ENCODE measurements at regions of chr2 and their contacts with region 1.

Region 1: DNA sequence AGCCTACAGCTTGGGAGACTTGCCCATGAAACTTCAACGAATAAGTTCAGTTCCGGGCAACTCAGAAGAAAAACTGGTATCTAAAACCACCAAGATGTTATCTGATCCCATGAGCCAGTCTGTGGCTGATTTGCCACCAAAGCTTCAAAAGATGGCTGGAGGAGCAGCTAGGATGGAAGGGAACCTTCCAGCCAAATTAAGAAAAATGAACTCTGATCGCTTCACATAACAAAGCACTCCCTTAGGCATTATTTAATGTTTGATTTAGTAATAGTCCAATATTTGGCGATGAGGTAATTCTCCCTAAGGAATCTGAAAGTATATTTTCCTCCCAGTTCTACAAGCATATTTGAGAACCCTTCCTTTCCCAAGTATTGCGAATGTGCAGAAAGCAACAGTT is 156.6 kb downstream of the KCNJ3 start:
- DNase-seq: no peak
- H3K4me3 ChIP-seq: no peak overlapping the region
- H3K27ac ChIP-seq: no peak overlapping the region
- H3K4me1 ChIP-seq: no peaks in the 10 kb centered on the region
- H3K27me3 ChIP-seq: no peaks in the 10 kb centered on the region
- CTCF ChIP-seq: no peak
- EP300 ChIP-seq: no peak
- POLR2A ChIP-seq: no peak

Region 2: GRCh38 chr2:154443919-154444318 is 411.2 kb before region 1 on chr2:
- intact Hi-C with region 1: loop called in 1 of 4 experiments (anchors 5 kb)
- DNase-seq: no peak
- H3K4me3 ChIP-seq: no peak overlapping the region
- H3K27ac ChIP-seq: no peak overlapping the region
- H3K4me1 ChIP-seq: no peaks in the 10 kb centered on the region
- H3K27me3 ChIP-seq: no peaks in the 10 kb centered on the region
- CTCF ChIP-seq: no peak
- EP300 ChIP-seq: no peak
- POLR2A ChIP-seq: no peak

Region 3: DNA sequence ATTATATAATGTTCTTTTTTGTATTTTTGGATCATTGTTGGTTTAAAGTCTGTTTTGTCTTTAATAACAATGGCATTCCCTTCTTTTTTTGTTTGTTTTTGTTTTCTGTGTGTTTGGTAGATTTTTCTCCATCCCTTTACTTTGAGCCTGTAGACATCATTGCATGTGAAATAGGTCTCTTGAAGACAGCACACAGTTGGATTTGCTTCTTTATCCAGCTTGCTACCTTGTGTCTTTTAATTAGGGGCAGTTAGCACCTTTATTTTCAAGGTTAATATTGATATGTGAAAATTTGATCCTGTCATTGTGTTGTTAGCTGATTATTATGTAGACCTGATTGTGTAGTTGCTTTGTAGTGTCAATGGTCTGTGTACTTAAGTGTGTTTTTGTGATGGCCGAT is 79.1 kb after region 1 on chr2:
- intact Hi-C with region 1: no loop called
- DNase-seq: no peak
- H3K4me3 ChIP-seq: no peak overlapping the region
- H3K27ac ChIP-seq: no peak overlapping the region
- H3K4me1 ChIP-seq: no peaks in the 10 kb centered on the region
- H3K27me3 ChIP-seq: no peaks in the 10 kb centered on the region
- CTCF ChIP-seq: no peak
- EP300 ChIP-seq: no peak
- POLR2A ChIP-seq: no peak